ENCODE measurements at regions of chr4 and their contacts with region 1.

Region 1: GRCh38 chr4:146522098-146522868 is 543 bp upstream of the SLC10A7 start:
- DNase-seq: peak; percentile 89
- ATAC-seq: peak; percentile 79
- H3K4me3 Mint-ChIP-seq: no peak overlapping the region
- H3K27ac Mint-ChIP-seq: no peak overlapping the region
- H3K4me1 Mint-ChIP-seq: peaks cover 19% of the 10 kb centered on the region
- H3K27me3 Mint-ChIP-seq: no peaks in the 10 kb centered on the region
- CTCF ChIP-seq: no peak

Region 2: GRCh38 chr4:146342600-146343192 is 179.6 kb before region 1 on chr4:
- CTCF ChIA-PET with region 1: interaction called, 3 read pairs
- POLR2A ChIA-PET with region 1: interaction called, 3 read pairs
- intact Hi-C with region 1: loop called (anchors 5 kb)
- DNase-seq: peak; percentile 60
- ATAC-seq: no peak
- H3K4me3 Mint-ChIP-seq: no peak overlapping the region
- H3K27ac Mint-ChIP-seq: no peak overlapping the region
- H3K4me1 Mint-ChIP-seq: peaks cover 14% of the 10 kb centered on the region
- H3K27me3 Mint-ChIP-seq: no peaks in the 10 kb centered on the region
- CTCF ChIP-seq: peak; percentile 88

Region 3: GRCh38 chr4:146458594-146458993 is 63.7 kb before region 1 on chr4:
- CTCF ChIA-PET with region 1: no interaction called
- POLR2A ChIA-PET with region 1: interaction called, 4 read pairs
- intact Hi-C with region 1: loop called (anchors 5 kb)
- DNase-seq: no peak
- ATAC-seq: peak; percentile 96
- H3K4me3 Mint-ChIP-seq: peak overlapping the region; percentile 62
- H3K27ac Mint-ChIP-seq: peak overlapping the region; percentile 93
- H3K4me1 Mint-ChIP-seq: peaks cover 28% of the 10 kb centered on the region
- H3K27me3 Mint-ChIP-seq: no peaks in the 10 kb centered on the region
- CTCF ChIP-seq: no peak

Region 4: GRCh38 chr4:146550161-146550560 is 27.9 kb after region 1 on chr4:
- CTCF ChIA-PET with region 1: no interaction called
- POLR2A ChIA-PET with region 1: no interaction called
- intact Hi-C with region 1: no loop called
- DNase-seq: no peak
- ATAC-seq: no peak
- H3K4me3 Mint-ChIP-seq: no peak overlapping the region
- H3K27ac Mint-ChIP-seq: no peak overlapping the region
- H3K4me1 Mint-ChIP-seq: no peaks in the 10 kb centered on the region
- H3K27me3 Mint-ChIP-seq: peaks cover 3% of the 10 kb centered on the region
- CTCF ChIP-seq: no peak

Measured in activated CD8-positive, alpha-beta T cell treated with anti-CD3 and anti-CD28 coated beads for 36 hours (primary cell).